ENCODE measurements at regions of chr3 and their contacts with region 1.

Region 1: GRCh38 chr3:106268696-106269095 is 399.9 kb upstream of the CBLB start:
- DNase-seq: no peak
- ATAC-seq: peak; percentile 50
- H3K4me3 Mint-ChIP-seq: peak overlapping the region; percentile 55
- H3K27ac Mint-ChIP-seq: peak overlapping the region; percentile 60
- H3K4me1 Mint-ChIP-seq: peaks cover 46% of the 10 kb centered on the region
- H3K27me3 Mint-ChIP-seq: no peaks in the 10 kb centered on the region
- CTCF ChIP-seq: no peak

Region 2: DNA sequence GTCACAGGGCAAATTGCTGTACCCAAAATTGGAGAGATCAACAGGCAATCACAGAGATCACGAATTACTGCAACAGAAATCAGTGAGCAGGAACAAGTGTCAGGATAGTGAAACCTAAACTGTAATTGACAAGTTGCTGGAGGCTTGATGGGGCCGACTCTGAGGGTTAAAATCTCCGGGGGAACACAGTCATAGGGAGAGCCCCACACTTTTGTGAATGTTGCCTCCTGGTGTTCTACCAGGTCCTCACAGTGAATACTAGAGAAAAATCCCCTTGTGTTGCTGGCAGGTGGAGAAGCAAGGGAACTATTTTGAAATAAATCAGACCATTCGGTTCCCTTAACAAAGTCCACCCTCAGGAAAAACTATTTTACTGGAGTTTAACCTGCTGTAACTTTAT is 297.6 kb after region 1 on chr3:
- CTCF ChIA-PET with region 1: no interaction called
- POLR2A ChIA-PET with region 1: no interaction called
- intact Hi-C with region 1: loop called (anchors 5 kb)
- DNase-seq: no peak
- ATAC-seq: peak; percentile 65
- H3K4me3 Mint-ChIP-seq: no peak overlapping the region
- H3K27ac Mint-ChIP-seq: no peak overlapping the region
- H3K4me1 Mint-ChIP-seq: peaks cover 5% of the 10 kb centered on the region
- H3K27me3 Mint-ChIP-seq: peaks cover 4% of the 10 kb centered on the region
- CTCF ChIP-seq: no peak